Adrenal gland (tissue), 19 donors: ENCODE measurements at regions of chr3 and their contacts with region 1.

Region 1: GRCh38 chr3:12590096-12590495 is 33.2 kb downstream of the MKRN2 start:
- DNase-seq: no peak
- H3K4me3 ChIP-seq: no peak overlapping the region
- H3K27ac ChIP-seq: no peak overlapping the region
- H3K4me1 ChIP-seq: peaks cover 5 to 13% of the 10 kb centered on the region in 2 donors
- H3K27me3 ChIP-seq: no peaks in the 10 kb centered on the region
- CTCF ChIP-seq: no peak
- POLR2A ChIP-seq: no peak

Region 2: GRCh38 chr3:12663936-12664908 is 74.1 kb after region 1 on chr3 and contains the start of gene RAF1:
- intact Hi-C with region 1: loop called in 1 of 2 experiments (anchors 10 kb)
- DNase-seq: peak; percentile 98 to 99 (median 98)
- H3K4me3 ChIP-seq: peak within 1 kb of the TSS; percentile 13 to 92 (median 72)
- H3K27ac ChIP-seq: peak within 1 kb of the TSS; percentile 90 to 98 (median 98)
- H3K4me1 ChIP-seq: peaks cover 13 to 31% of the 10 kb centered on the region in 2 donors
- H3K27me3 ChIP-seq: no peaks in the 10 kb centered on the region
- CTCF ChIP-seq: no peak
- POLR2A ChIP-seq: peak; percentile 75 to 92
- total RNA-seq, gene RAF1: 62.2 to 110 (median 73.5) TPM

Region 3: DNA sequence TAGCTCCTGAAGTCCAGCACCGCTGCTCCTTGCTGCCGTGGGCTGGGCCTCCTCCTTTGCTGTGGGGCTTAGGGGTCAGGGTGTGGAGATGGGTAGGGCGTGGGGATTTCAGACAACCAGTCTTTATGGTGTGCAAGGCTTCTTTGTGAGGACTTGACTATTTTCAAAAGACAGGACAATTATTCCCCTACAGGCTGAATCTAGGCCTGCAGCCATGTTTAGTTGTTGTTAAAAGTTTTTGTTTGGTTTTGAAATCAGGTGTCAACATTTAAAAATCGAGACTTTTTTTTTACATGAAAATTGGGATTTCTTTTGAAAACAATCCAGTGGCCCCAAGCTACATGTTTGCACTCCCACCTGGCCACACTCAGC is 240.7 kb after region 1 on chr3:
- intact Hi-C with region 1: no loop called
- DNase-seq: no peak
- H3K4me3 ChIP-seq: no peak overlapping the region
- H3K27ac ChIP-seq: no peak overlapping the region
- H3K4me1 ChIP-seq: no peaks in the 10 kb centered on the region
- H3K27me3 ChIP-seq: no peaks in the 10 kb centered on the region
- CTCF ChIP-seq: peak in 2 of 6 experiments; percentile 9 to 12
- POLR2A ChIP-seq: no peak

Region 4: DNA sequence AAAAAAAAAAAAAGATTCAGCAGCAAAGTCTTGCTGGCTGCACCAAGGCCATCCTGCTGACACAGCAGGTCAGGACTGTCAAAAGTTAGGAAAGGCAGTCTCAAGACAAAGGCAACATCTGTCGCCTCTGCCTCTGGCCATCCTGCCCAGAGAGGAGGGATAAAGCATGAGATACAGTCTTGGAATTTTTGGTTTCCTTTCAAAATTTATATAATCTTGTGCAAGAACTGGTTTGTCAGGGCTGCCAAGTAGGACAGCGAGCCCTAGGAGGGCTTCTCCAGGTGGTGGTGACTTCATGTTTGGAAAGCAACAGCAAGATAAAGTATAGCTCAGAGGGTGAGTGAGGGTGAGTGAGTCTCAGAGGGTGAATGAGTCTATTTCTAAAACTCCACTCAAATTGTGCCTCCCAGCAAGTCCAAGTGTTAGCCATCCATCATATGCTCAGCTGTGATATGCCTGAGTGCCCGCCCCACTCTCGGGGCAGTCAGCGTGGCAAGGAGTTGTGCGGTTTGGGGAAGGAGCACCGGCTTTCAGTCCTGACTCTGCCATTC is 263.2 kb after region 1 on chr3:
- intact Hi-C with region 1: no loop called
- DNase-seq: peak in 4 of 7 donors; percentile 24 to 57 (median 44)
- H3K4me3 ChIP-seq: no peak overlapping the region
- H3K27ac ChIP-seq: no peak overlapping the region
- H3K4me1 ChIP-seq: no peaks in the 10 kb centered on the region
- H3K27me3 ChIP-seq: no peaks in the 10 kb centered on the region
- CTCF ChIP-seq: no peak
- POLR2A ChIP-seq: no peak